Cardiac septum (tissue), 1 donor: ENCODE measurements at regions of chr10 and their contacts with region 1.

Region 1: DNA sequence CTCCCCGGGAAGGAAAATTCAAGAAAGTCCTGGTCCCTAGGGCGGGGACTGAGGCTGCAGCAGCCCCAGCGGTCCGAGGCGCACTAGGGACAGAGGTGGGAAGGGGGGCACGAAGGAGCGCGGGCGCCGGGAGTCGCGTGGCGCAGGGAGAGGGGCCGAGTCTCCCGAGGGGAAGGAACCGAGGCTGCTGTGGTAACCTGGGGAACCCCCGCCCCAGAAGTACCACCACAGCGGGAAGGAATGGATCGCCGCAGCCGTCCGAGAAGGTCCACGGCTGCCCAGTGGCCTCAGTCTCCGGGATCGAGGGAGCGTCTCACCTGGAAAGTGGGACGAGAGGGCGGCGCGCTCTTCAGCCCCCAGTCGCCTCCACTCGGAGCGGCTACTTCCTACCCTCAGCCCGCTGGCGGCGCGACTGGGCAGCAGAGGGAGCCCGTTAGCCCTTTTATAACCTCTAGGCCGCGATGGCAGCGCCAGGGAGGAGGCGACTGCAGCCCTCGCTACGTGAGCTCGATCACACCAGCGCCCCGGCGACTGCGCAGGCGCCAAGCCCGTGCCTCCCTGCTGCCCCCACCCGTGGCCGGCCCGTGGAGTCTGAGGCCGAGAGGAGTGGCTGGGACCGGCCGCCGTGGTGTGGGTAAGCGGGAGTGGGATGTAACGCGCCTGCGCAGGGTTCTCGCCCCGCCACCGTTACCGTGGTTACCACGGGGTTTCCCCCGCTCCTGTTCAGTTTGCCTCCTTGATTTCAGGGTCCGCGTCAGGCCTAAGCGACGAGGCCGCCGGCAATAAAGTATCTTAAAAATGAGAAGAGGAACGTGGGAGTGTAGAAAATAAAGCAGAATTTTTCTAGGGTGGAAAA is at the start of gene P4HA1:
- DNase-seq: peak; percentile 99
- total RNA-seq, gene P4HA1: 54.8 TPM

Region 2: GRCh38 chr10:72802763-72803505 is 293.7 kb before region 1 on chr10:
- intact Hi-C with region 1: no loop called
- DNase-seq: no peak

Region 3: GRCh38 chr10:73076360-73077183 is 20.1 kb before region 1 on chr10:
- intact Hi-C with region 1: loop called (anchors 1 kb)
- DNase-seq: peak; percentile 82

Region 4: GRCh38 chr10:73110345-73110849 is 13.7 kb after region 1 on chr10 and contains the start of gene NUDT13:
- intact Hi-C with region 1: loop called (anchors 2 kb)
- DNase-seq: peak; percentile 88
- total RNA-seq, gene NUDT13: 2.4 TPM

Region 5: GRCh38 chr10:73167783-73168464 is 71.2 kb after region 1 on chr10 and contains the starts of genes ECD and FAM149B1:
- intact Hi-C with region 1: loop called (anchors 2 kb)
- DNase-seq: peak; percentile 95
- total RNA-seq, gene ECD: 17.0 TPM
- total RNA-seq, gene FAM149B1: 11.5 TPM

Region 6: DNA sequence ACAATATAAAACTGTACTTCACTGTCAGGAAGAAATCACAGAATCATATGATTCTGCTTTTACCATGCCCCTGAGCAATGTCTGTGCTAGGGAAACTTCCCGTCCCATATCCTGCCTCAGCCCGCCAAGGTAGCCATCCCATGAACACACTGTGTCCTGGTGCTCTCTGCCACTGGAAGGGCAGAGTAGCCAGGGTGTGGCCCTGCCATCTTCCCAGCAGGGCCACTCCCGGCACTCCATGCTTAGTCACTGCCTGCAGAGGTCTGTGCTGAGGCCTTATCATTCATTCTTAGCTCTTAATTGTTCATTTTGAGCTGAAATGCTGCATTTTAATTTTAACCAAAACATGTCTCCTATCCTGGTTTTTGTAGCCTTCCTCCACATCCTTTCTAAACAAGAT is 1022.1 kb after region 1 on chr10:
- intact Hi-C with region 1: no loop called
- DNase-seq: no peak